Naive thymus-derived CD4-positive, alpha-beta T cell (primary cell): ENCODE measurements at regions of chr13 and their contacts with region 1.

Region 1: GRCh38 chr13:49792550-49793324 is at the start of gene KPNA3:
- DNase-seq: peak; percentile 86 to 97 (median 95)
- ATAC-seq: peak; percentile 93
- H3K4me3 ChIP-seq: peak within 1 kb of the TSS; percentile 96
- H3K4me3 Mint-ChIP-seq: peak within 1 kb of the TSS; percentile 87 to 99 (median 96)
- H3K27ac ChIP-seq: peak within 1 kb of the TSS; percentile 80
- H3K27ac Mint-ChIP-seq: peak within 1 kb of the TSS; percentile 91 to 98 (median 96)
- H3K4me1 ChIP-seq: peaks cover 19 to 23% of the 10 kb centered on the region in 2 donors
- H3K4me1 Mint-ChIP-seq: peaks cover 19 to 42% (median 31%) of the 10 kb centered on the region in 7 donors
- H3K27me3 ChIP-seq: no peaks in the 10 kb centered on the region
- H3K27me3 Mint-ChIP-seq: peaks cover 2 to 8% (median 3%) of the 10 kb centered on the region in 5 donors
- total RNA-seq, gene KPNA3: 17.0 to 38.7 (median 19.6) TPM

Region 2: DNA sequence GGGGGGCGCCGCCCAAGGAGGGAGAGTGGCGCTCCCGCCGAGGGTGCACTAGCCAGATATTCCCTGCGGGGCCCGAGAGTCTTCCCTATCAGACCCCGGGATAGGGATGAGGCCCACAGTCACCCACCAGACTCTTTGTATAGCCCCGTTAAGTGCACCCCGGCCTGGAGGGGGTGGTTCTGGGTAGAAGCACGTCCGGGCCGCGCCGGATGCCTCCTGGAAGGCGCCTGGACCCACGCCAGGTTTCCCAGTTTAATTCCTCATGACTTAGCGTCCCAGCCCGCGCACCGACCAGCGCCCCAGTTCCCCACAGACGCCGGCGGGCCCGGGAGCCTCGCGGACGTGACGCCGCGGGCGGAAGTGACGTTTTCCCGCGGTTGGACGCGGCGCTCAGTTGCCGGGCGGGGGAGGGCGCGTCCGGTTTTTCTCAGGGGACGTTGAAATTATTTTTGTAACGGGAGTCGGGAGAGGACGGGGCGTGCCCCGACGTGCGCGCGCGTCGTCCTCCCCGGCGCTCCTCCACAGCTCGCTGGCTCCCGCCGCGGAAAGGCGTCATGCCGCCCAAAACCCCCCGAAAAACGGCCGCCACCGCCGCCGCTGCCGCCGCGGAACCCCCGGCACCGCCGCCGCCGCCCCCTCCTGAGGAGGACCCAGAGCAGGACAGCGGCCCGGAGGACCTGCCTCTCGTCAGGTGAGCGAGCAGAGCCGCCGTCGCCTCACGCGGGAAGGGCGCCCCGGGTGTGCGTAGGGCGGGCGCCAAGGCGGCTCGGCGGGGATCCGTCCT is 1489.2 kb before region 1 on chr13 and contains the start of gene RB1:
- CTCF ChIA-PET with region 1: no interaction called
- POLR2A ChIA-PET with region 1: no interaction called
- intact Hi-C with region 1: loop called in 1 of 2 experiments (anchors 2 kb)
- DNase-seq: peak; percentile 85 to 92 (median 89)
- ATAC-seq: peak; percentile 92
- H3K4me3 ChIP-seq: peak within 1 kb of the TSS; percentile 85
- H3K4me3 Mint-ChIP-seq: peak within 1 kb of the TSS; percentile 76 to 99 (median 94)
- H3K27ac ChIP-seq: peak within 1 kb of the TSS; percentile 99
- H3K27ac Mint-ChIP-seq: peak within 1 kb of the TSS; percentile 93 to 98 (median 97)
- H3K4me1 ChIP-seq: peaks cover 10 to 15% of the 10 kb centered on the region in 2 donors
- H3K4me1 Mint-ChIP-seq: peaks cover 16 to 47% (median 40%) of the 10 kb centered on the region in 7 donors
- H3K27me3 ChIP-seq: no peaks in the 10 kb centered on the region
- H3K27me3 Mint-ChIP-seq: no peaks in the 10 kb centered on the region
- total RNA-seq, gene RB1: 18.0 to 37.1 (median 23.6) TPM

Region 3: DNA sequence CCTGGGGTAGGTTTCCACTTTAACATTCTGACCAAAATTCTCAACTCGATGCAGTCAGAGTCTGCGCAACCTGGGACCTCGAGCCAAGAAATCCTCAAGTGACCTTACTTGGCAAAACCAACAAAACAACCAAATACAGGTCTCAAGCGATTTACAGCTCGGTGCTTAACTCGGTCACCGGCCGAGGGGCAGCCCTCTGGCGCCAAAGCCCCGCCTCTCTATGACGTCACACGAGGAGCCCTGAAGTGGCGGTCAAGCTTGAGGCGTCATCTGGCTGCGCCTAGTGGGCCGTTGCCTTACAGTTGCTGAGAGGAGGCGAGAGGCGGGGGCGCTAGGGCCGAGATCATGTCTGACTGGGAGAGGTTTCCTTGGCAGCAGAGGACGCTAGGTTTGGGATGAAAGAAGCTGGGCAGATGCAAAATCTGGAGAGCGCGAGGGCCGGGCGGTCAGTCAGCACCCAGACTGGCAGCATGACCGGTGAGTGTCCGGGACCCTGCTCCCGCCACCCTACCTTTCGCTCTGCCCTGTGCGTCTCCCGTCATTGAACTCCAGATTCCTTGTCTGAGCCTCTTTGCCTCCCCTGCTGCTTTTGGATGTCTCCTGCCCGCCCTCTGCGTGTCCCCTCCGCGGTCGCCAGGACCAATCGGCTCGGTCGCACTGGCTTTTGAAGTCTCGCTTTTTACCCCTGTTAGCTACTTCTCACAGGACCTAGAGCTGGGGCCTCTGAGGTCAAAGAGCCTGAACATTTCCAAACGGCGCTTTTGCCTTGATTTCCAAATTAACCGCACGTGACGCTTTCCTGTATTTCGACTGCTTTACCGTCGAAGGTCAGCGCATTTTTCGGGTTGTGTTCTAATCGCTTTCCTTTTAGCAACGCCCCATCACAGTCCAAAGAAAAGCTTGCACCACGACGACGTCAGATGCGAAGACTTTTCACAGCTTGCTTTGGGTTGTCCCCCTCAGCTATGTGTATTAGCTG is 544.8 kb before region 1 on chr13 and contains the start of gene CDADC1:
- CTCF ChIA-PET with region 1: no interaction called
- POLR2A ChIA-PET with region 1: no interaction called
- intact Hi-C with region 1: loop called in 1 of 2 experiments (anchors 2 kb)
- DNase-seq: peak; percentile 44 to 93 (median 54)
- ATAC-seq: peak; percentile 90
- H3K4me3 ChIP-seq: peak within 1 kb of the TSS; percentile 93
- H3K4me3 Mint-ChIP-seq: peak within 1 kb of the TSS; percentile 94 to 99 (median 98)
- H3K27ac ChIP-seq: peak within 1 kb of the TSS; percentile 75
- H3K27ac Mint-ChIP-seq: peak within 1 kb of the TSS; percentile 92 to 97 (median 95)
- H3K4me1 ChIP-seq: peaks cover 1 to 3% of the 10 kb centered on the region in 2 donors
- H3K4me1 Mint-ChIP-seq: peaks cover 16 to 59% (median 53%) of the 10 kb centered on the region in 7 donors
- H3K27me3 ChIP-seq: no peaks in the 10 kb centered on the region
- H3K27me3 Mint-ChIP-seq: peaks cover 0 to 25% (median 0%) of the 10 kb centered on the region in 5 donors
- total RNA-seq, gene CDADC1: 10.7 to 21.3 (median 14.5) TPM

Region 4: GRCh38 chr13:49585220-49586157 is 207.2 kb before region 1 on chr13 and contains the start of gene RCBTB1:
- CTCF ChIA-PET with region 1: no interaction called
- POLR2A ChIA-PET with region 1: no interaction called
- intact Hi-C with region 1: loop called (anchors 1 kb)
- DNase-seq: peak; percentile 47 to 74 (median 66)
- ATAC-seq: peak; percentile 97
- H3K4me3 ChIP-seq: peak within 1 kb of the TSS; percentile 56
- H3K4me3 Mint-ChIP-seq: peak within 1 kb of the TSS; percentile 83 to 100 (median 92)
- H3K27ac ChIP-seq: peak within 1 kb of the TSS; percentile 82
- H3K27ac Mint-ChIP-seq: peak within 1 kb of the TSS; percentile 86 to 96 (median 94)
- H3K4me1 ChIP-seq: peaks cover 10 to 16% of the 10 kb centered on the region in 2 donors
- H3K4me1 Mint-ChIP-seq: peaks cover 32 to 53% (median 50%) of the 10 kb centered on the region in 7 donors
- H3K27me3 ChIP-seq: no peaks in the 10 kb centered on the region
- H3K27me3 Mint-ChIP-seq: peaks cover 0 to 3% (median 0%) of the 10 kb centered on the region in 5 donors
- total RNA-seq, gene RCBTB1: 16.3 to 22.2 (median 20.4) TPM

Region 5: GRCh38 chr13:49759503-49759902 is 33.2 kb before region 1 on chr13:
- CTCF ChIA-PET with region 1: no interaction called
- POLR2A ChIA-PET with region 1: no interaction called
- intact Hi-C with region 1: loop called in 1 of 2 experiments (anchors 2 kb)
- DNase-seq: peak in 4 of 9 donors; percentile 5 to 20 (median 11)
- ATAC-seq: no peak
- H3K4me3 ChIP-seq: no peak overlapping the region
- H3K4me3 Mint-ChIP-seq: peak overlapping the region in 7 of 10 donors; percentile 29 to 55 (median 43)
- H3K27ac ChIP-seq: no peak overlapping the region
- H3K27ac Mint-ChIP-seq: peak overlapping the region in 6 of 9 donors; percentile 15 to 73 (median 56)
- H3K4me1 ChIP-seq: peaks cover 0 to 17% of the 10 kb centered on the region in 2 donors
- H3K4me1 Mint-ChIP-seq: peaks cover 23 to 70% (median 54%) of the 10 kb centered on the region in 7 donors
- H3K27me3 ChIP-seq: no peaks in the 10 kb centered on the region
- H3K27me3 Mint-ChIP-seq: no peaks in the 10 kb centered on the region

Region 6: DNA sequence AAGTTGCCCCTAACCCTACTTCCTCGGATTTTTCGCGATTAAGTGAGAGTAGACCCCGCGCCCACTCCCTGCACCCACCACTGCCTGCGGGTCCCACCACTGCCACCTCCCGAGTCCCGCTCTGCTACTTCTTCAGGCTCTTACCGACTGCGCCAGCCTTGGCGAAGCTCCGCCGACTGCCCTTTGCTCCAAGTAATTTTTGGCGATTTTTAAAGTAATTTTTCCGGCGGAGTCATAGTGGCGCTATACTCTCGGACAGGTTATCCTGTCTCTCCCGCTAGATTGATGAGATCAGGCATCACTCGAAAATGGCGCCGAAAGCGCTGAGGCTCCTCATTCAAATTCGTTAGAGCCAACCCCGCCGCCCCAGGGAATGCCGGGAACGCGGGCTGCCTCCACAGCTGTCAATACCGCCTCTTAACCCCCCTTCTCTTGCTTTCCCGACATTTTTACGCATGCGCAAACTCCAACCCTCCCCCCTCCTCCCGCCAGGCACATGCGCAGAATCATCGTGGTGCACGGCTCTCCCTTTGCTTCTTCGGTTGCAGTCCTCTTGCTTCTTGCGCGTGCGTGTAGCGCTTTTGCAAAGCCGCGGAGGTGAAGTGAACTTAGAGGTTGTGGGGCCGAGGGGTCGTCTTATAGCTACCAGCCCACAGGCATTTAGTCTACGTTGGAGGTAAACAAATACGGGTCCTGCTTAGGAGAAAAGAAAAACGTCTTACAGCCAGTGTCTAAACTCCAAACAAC is 289.1 kb after region 1 on chr13:
- CTCF ChIA-PET with region 1: no interaction called
- POLR2A ChIA-PET with region 1: interaction called, 3 read pairs
- intact Hi-C with region 1: loop called (anchors 1 kb)
- DNase-seq: peak; percentile 94 to 99 (median 99)
- ATAC-seq: peak; percentile 88
- H3K4me3 ChIP-seq: peak overlapping the region; percentile 63
- H3K4me3 Mint-ChIP-seq: peak overlapping the region; percentile 90 to 100 (median 95)
- H3K27ac ChIP-seq: peak overlapping the region; percentile 86
- H3K27ac Mint-ChIP-seq: peak overlapping the region; percentile 88 to 99 (median 94)
- H3K4me1 ChIP-seq: peaks cover 17% of the 10 kb centered on the region in 2 donors
- H3K4me1 Mint-ChIP-seq: peaks cover 13 to 63% (median 49%) of the 10 kb centered on the region in 7 donors
- H3K27me3 ChIP-seq: peaks cover 0 to 8% of the 10 kb centered on the region in 2 donors
- H3K27me3 Mint-ChIP-seq: peaks cover 0 to 11% (median 7%) of the 10 kb centered on the region in 5 donors

Region 7: GRCh38 chr13:50893211-50893852 is 1100.6 kb after region 1 on chr13:
- CTCF ChIA-PET with region 1: no interaction called
- POLR2A ChIA-PET with region 1: no interaction called
- intact Hi-C with region 1: loop called (anchors 5 kb)
- DNase-seq: peak in 7 of 9 donors; percentile 34 to 68 (median 55)
- ATAC-seq: peak; percentile 91
- H3K4me3 ChIP-seq: peak overlapping the region; percentile 30
- H3K4me3 Mint-ChIP-seq: peak overlapping the region; percentile 67 to 88 (median 82)
- H3K27ac ChIP-seq: peak overlapping the region; percentile 69
- H3K27ac Mint-ChIP-seq: peak overlapping the region; percentile 82 to 98 (median 95)
- H3K4me1 ChIP-seq: peaks cover 16 to 27% of the 10 kb centered on the region in 2 donors
- H3K4me1 Mint-ChIP-seq: peaks cover 26 to 50% (median 47%) of the 10 kb centered on the region in 7 donors
- H3K27me3 ChIP-seq: no peaks in the 10 kb centered on the region
- H3K27me3 Mint-ChIP-seq: no peaks in the 10 kb centered on the region

Region 8: GRCh38 chr13:51297556-51297955 is 1504.8 kb after region 1 on chr13:
- CTCF ChIA-PET with region 1: no interaction called
- POLR2A ChIA-PET with region 1: no interaction called
- intact Hi-C with region 1: no loop called
- DNase-seq: no peak
- ATAC-seq: no peak
- H3K4me3 ChIP-seq: no peak overlapping the region
- H3K4me3 Mint-ChIP-seq: no peak overlapping the region
- H3K27ac ChIP-seq: no peak overlapping the region
- H3K27ac Mint-ChIP-seq: no peak overlapping the region
- H3K4me1 ChIP-seq: no peaks in the 10 kb centered on the region
- H3K4me1 Mint-ChIP-seq: no peaks in the 10 kb centered on the region
- H3K27me3 ChIP-seq: no peaks in the 10 kb centered on the region
- H3K27me3 Mint-ChIP-seq: peaks cover 0 to 5% (median 0%) of the 10 kb centered on the region in 5 donors